ENCODE measurements at regions of chr1 and their contacts with region 1.

Region 1: GRCh38 chr1:197343663-197344273 is 75.7 kb downstream of the CRB1 start:
- DNase-seq: no peak
- H3K4me3 ChIP-seq: no peak overlapping the region
- H3K27ac ChIP-seq: no peak overlapping the region
- H3K4me1 ChIP-seq: no peaks in the 10 kb centered on the region
- H3K27me3 ChIP-seq: no peaks in the 10 kb centered on the region
- CTCF ChIP-seq: no peak
- POLR2A ChIP-seq: no peak

Region 2: GRCh38 chr1:196418792-196419191 is 925.0 kb before region 1 on chr1:
- intact Hi-C with region 1: loop called (anchors 10 kb)
- DNase-seq: no peak
- H3K4me3 ChIP-seq: no peak overlapping the region
- H3K27ac ChIP-seq: no peak overlapping the region
- H3K4me1 ChIP-seq: no peaks in the 10 kb centered on the region
- H3K27me3 ChIP-seq: no peaks in the 10 kb centered on the region
- CTCF ChIP-seq: no peak
- POLR2A ChIP-seq: no peak